HEK293 (cell line): ENCODE measurements at regions of chr5 and their contacts with region 1.

Region 1: GRCh38 chr5:59506285-59506877 is 387.1 kb downstream of the PDE4D start:
- H3K4me3 ChIP-seq: no peak overlapping the region
- H3K27ac ChIP-seq: no peak overlapping the region
- H3K4me1 ChIP-seq: no peaks in the 10 kb centered on the region
- CTCF ChIP-seq: 0 out of 2 replicates have a peak, but pooled peaks have one; percentile 23

Region 2: GRCh38 chr5:59666440-59667068 is 160.2 kb after region 1 on chr5:
- CTCF ChIA-PET with region 1: interaction called, 83 read pairs
- POLR2A ChIA-PET with region 1: no interaction called
- H3K4me3 ChIP-seq: no peak overlapping the region
- H3K27ac ChIP-seq: no peak overlapping the region
- H3K4me1 ChIP-seq: peaks cover 2% of the 10 kb centered on the region; the same call in 1 of the 2 replicates
- CTCF ChIP-seq: no peak

Region 3: GRCh38 chr5:59673438-59674058 is 167.2 kb after region 1 on chr5:
- CTCF ChIA-PET with region 1: interaction called, 81 read pairs
- POLR2A ChIA-PET with region 1: no interaction called
- H3K4me3 ChIP-seq: no peak overlapping the region
- H3K27ac ChIP-seq: no peak overlapping the region
- H3K4me1 ChIP-seq: no peaks in the 10 kb centered on the region; the same call in 1 of the 2 replicates
- CTCF ChIP-seq: peak; percentile 19; the same call in 1 of the 2 replicates

Region 4: GRCh38 chr5:59799668-59800346 is 293.4 kb after region 1 on chr5:
- CTCF ChIA-PET with region 1: interaction called, 25 read pairs
- POLR2A ChIA-PET with region 1: no interaction called
- H3K4me3 ChIP-seq: no peak overlapping the region
- H3K27ac ChIP-seq: no peak overlapping the region
- H3K4me1 ChIP-seq: peaks cover 15% of the 10 kb centered on the region
- CTCF ChIP-seq: peak; percentile 68

Region 5: DNA sequence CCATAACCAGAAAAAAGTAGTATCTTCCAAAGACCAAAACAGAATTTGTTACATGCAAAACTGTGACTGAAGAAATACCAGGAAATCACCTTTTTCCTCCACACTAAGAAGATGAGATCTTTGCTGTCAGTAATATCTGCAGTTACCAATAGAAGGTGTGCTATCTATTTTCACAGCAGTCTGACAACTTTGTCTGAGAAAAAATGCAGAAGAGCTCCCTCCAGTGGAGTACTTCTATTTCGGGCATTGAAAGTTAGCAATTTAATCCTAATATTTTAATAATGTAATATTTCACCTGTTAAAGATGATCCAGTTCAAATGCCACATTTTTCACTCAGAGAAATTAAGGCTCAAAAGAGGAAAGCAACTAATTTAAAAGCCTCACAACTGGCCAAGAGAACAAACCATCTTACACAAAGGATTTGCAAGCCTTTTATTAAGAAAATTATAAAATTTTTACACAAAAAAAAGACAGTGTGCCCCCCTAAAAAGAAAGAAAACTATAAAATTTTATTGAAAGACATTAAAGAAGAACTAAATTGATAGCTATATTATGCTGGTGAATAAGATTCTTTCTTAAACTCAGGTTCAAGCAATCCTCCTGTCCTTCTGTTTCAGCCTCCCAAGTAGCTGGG is 1143.0 kb after region 1 on chr5:
- CTCF ChIA-PET with region 1: no interaction called
- POLR2A ChIA-PET with region 1: no interaction called
- H3K4me3 ChIP-seq: no peak overlapping the region
- H3K27ac ChIP-seq: no peak overlapping the region
- H3K4me1 ChIP-seq: no peaks in the 10 kb centered on the region
- CTCF ChIP-seq: no peak